AG04450 (cell line): ENCODE measurements at regions of chr2 and their contacts with region 1.

Region 1: DNA sequence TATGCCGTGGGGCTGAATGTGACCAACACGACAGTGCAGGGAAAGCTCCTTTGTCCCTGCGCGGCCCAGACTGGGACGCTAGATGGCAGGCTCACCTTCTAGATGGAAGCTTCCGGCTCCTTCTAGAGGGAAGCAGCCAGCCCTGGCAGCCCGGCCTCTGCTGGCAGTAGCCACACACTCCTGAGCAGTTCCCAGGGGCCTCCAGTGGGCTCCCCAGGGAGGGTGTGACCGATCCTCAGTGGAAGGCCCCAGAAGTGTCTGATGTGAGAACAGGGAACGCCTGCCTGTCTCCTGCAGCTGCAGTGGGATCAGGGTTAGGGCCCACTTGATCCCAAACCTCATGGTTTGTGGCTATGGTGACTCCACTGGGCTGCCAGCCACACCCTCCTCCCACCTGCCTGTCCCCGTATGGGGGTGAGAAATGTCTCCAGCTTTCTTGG is 48.5 kb upstream of the LRPPRC start:
- DNase-seq: peak; percentile 47
- H3K4me3 ChIP-seq: no peak overlapping the region
- H3K27ac ChIP-seq: no peak overlapping the region
- H3K27me3 ChIP-seq: peaks cover 26% of the 10 kb centered on the region
- CTCF ChIP-seq: peak; percentile 97

Region 2: GRCh38 chr2:43611987-43612894 is 432.1 kb before region 1 on chr2:
- CTCF ChIA-PET with region 1: no interaction called
- POLR2A ChIA-PET with region 1: no interaction called
- DNase-seq: no peak
- H3K4me3 ChIP-seq: no peak overlapping the region
- H3K27ac ChIP-seq: no peak overlapping the region
- H3K27me3 ChIP-seq: peaks cover under 1% of the 10 kb centered on the region
- CTCF ChIP-seq: peak; percentile 92

Region 3: GRCh38 chr2:43927442-43927841 is 116.9 kb before region 1 on chr2:
- CTCF ChIA-PET with region 1: no interaction called
- POLR2A ChIA-PET with region 1: no interaction called
- DNase-seq: no peak
- H3K4me3 ChIP-seq: no peak overlapping the region
- H3K27ac ChIP-seq: no peak overlapping the region
- H3K27me3 ChIP-seq: no peaks in the 10 kb centered on the region
- CTCF ChIP-seq: no peak

Region 4: DNA sequence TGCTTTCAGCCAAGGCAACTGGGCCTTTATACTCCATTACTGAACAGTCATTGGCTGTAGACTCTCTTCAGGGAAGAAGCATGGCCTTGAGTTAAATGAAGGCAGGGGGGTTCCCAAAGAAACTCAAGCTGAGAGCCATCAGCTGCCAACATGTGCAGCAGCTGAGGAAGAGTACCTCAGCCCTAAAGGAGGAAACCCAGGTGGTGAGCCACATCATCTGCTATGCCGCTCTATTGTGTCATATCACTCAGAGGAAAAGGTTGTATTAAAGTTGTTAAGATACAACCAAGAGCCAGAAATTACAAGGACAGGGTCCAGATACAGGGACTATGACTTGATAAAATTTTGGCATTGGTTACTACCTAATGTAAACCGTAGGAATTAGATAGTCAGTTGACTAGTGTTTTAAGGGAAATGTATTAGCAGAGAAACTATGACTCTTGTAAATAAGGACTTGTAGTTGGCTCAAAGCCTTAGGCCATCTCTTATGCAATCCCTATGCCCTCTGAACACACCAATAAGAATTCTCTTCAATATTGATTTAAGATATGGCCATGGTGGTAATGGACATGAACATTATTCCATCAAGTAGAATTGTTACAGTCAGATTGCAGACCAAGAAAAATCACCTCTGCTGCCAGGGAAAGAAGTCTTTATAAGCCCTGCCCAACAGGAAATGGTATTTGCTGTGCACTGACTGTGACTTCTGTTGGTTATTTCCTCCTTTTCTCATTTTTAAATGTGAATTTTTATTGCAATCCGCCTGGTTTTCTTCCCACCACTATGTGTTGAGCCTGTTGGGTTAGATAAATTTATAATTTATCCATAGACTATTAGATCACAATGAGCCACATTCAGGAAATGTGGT is 39.3 kb before region 1 on chr2:
- CTCF ChIA-PET with region 1: no interaction called
- POLR2A ChIA-PET with region 1: no interaction called
- DNase-seq: no peak
- H3K4me3 ChIP-seq: no peak overlapping the region
- H3K27ac ChIP-seq: no peak overlapping the region
- H3K27me3 ChIP-seq: peaks cover 8% of the 10 kb centered on the region
- CTCF ChIP-seq: no peak

Region 5: DNA sequence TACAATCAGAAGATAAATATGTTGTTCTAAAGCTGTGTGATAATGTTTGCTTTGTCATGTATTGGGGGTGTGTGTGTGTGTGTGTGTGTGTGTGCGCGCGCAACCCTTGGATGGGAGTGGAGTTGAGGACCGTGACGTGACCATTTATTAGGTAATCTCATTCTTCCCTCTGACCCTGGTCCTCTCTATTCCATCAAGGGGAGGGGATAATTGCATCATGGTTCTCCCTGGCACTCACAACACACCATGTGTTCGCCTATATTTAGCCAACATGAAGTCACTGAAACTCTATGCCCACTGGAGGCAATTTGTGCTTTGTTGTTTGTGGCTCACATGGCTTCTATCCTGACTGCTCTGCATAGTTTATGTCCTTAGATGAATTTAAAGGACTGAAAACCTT is 31.2 kb after region 1 on chr2:
- CTCF ChIA-PET with region 1: interaction called, 13 read pairs
- POLR2A ChIA-PET with region 1: no interaction called
- DNase-seq: no peak
- H3K4me3 ChIP-seq: no peak overlapping the region
- H3K27ac ChIP-seq: no peak overlapping the region
- H3K27me3 ChIP-seq: peaks cover 5% of the 10 kb centered on the region
- CTCF ChIP-seq: no peak

Region 6: DNA sequence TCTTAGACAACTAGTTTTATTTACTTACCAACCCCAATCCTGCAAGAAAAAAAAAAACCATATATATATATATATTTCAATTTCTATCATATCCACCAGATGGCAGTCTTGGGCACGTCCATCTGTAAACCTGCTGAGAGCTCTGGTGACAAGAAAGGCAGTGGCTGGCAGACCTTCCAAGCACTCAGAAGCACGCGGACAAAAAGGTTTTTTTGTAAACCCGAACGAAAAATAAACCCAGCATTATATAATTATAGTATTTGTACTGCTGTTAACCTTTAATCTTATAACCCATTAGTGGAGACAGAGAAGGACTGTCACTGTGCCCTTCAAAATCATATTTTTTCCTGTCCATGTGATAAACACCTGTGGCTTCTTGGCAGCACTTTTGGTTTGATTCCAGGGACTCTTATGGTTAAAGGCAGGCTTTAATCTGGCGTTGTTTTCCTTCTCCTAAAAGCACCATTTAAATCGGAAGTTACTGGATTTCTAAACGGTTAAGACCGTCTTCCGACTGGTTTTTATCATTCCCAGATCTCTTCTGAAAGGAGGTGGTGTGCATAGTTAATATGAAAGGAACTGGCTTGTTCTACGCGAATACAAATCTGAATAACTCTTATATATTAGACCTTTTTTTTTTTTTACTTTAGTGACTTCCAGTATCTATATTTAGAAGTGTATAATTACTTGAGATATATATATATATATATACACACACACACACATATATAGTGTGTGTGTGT is 200.0 kb after region 1 on chr2:
- CTCF ChIA-PET with region 1: interaction called, 11 read pairs
- POLR2A ChIA-PET with region 1: no interaction called
- DNase-seq: peak; percentile 30
- H3K4me3 ChIP-seq: no peak overlapping the region
- H3K27ac ChIP-seq: no peak overlapping the region
- H3K27me3 ChIP-seq: no peaks in the 10 kb centered on the region
- CTCF ChIP-seq: peak; percentile 66

Region 7: GRCh38 chr2:44301111-44301510 is 256.8 kb after region 1 on chr2:
- CTCF ChIA-PET with region 1: interaction called, 16 read pairs
- POLR2A ChIA-PET with region 1: no interaction called
- DNase-seq: no peak
- H3K4me3 ChIP-seq: no peak overlapping the region
- H3K27ac ChIP-seq: no peak overlapping the region
- H3K27me3 ChIP-seq: peaks cover 8% of the 10 kb centered on the region
- CTCF ChIP-seq: no peak

Region 8: GRCh38 chr2:44470151-44470550 is 425.9 kb after region 1 on chr2:
- CTCF ChIA-PET with region 1: interaction called, 10 read pairs
- POLR2A ChIA-PET with region 1: no interaction called
- DNase-seq: no peak
- H3K4me3 ChIP-seq: no peak overlapping the region
- H3K27ac ChIP-seq: no peak overlapping the region
- H3K27me3 ChIP-seq: no peaks in the 10 kb centered on the region
- CTCF ChIP-seq: no peak